H1 (cell line): ENCODE measurements at regions of chr1 and their contacts with region 1.

Region 1: GRCh38 chr1:14915356-14916054 is 238.0 kb upstream of the TMEM51 start:
- DNase-seq: peak in 1 of 2 experiments; percentile 89
- H3K4me3 ChIP-seq: no peak overlapping the region; a peak in 1 of 8 replicates
- H3K27ac ChIP-seq: no peak overlapping the region
- H3K4me1 ChIP-seq: peaks cover 2 to 6% (median 4%) of the 10 kb centered on the region in 4 experiments; a peak in 6 of 7 replicates
- H3K27me3 ChIP-seq: no peaks in the 10 kb centered on the region; a peak in 1 of 7 replicates
- CTCF ChIP-seq: peak; percentile 73 to 93 (median 89)
- EP300 ChIP-seq: no peak
- POLR2A ChIP-seq: no peak
- RAD21 ChIP-seq: peak; percentile 61 to 75

Region 2: GRCh38 chr1:14926165-14926564 is 10.7 kb after region 1 on chr1:
- CTCF ChIA-PET with region 1: interaction called, 11 read pairs
- POLR2A ChIA-PET with region 1: no interaction called
- DNase-seq: no peak
- H3K4me3 ChIP-seq: no peak overlapping the region
- H3K27ac ChIP-seq: no peak overlapping the region
- H3K4me1 ChIP-seq: peaks cover 3 to 7% (median 3%) of the 10 kb centered on the region in 4 experiments; a peak in 6 of 7 replicates
- H3K27me3 ChIP-seq: peaks cover 9 to 36% (median 27%) of the 10 kb centered on the region in 4 experiments
- CTCF ChIP-seq: no peak
- EP300 ChIP-seq: no peak
- POLR2A ChIP-seq: no peak
- RAD21 ChIP-seq: no peak

Region 3: GRCh38 chr1:15046487-15047165 is 131.1 kb after region 1 on chr1:
- CTCF ChIA-PET with region 1: interaction called, 10 read pairs
- POLR2A ChIA-PET with region 1: no interaction called
- DNase-seq: peak; percentile 36 to 94
- H3K4me3 ChIP-seq: no peak overlapping the region
- H3K27ac ChIP-seq: no peak overlapping the region
- H3K4me1 ChIP-seq: no peaks in the 10 kb centered on the region
- H3K27me3 ChIP-seq: no peaks in the 10 kb centered on the region
- CTCF ChIP-seq: peak; percentile 87 to 95 (median 92)
- EP300 ChIP-seq: no peak
- POLR2A ChIP-seq: no peak
- RAD21 ChIP-seq: peak; percentile 98 to 99